ENCODE measurements at regions of chr7 and their contacts with region 1.

Region 1: DNA sequence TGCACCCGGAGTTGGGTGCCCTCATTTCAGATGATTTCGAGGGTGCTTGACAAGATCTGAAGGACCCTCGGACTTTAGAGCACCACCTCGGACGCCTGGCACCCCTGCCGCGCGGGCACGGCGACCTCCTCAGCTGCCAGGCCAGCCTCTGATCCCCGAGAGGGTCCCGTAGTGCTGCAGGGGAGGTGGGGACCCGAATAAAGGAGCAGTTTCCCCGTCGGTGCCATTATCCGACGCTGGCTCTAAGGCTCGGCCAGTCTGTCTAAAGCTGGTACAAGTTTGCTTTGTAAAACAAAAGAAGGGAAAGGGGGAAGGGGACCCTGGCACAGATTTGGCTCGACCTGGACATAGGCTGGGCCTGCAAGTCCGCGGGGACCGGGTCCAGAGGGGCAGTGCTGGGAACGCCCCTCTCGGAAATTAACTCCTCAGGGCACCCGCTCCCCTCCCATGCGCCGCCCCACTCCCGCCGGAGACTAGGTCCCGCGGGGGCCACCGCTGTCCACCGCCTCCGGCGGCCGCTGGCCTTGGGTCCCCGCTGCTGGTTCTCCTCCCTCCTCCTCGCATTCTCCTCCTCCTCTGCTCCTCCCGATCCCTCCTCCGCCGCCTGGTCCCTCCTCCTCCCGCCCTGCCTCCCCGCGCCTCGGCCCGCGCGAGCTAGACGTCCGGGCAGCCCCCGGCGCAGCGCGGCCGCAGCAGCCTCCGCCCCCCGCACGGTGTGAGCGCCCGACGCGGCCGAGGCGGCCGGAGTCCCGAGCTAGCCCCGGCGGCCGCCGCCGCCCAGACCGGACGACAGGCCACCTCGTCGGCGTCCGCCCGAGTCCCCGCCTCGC is at the start of gene EGFR:
- DNase-seq: peak; percentile 83 to 89 (median 85)
- ATAC-seq: peak; percentile 65 to 89 (median 84)
- H3K4me3 ChIP-seq: peak within 1 kb of the TSS; percentile 62 to 95 (median 84)
- H3K27ac ChIP-seq: peak within 1 kb of the TSS; percentile 61 to 97 (median 94)
- H3K4me1 ChIP-seq: peaks cover 0 to 22% (median 9%) of the 10 kb centered on the region in 12 donors
- H3K27me3 ChIP-seq: peaks cover 0 to 32% (median 14%) of the 10 kb centered on the region in 9 donors
- CTCF ChIP-seq: no peak
- POLR2A ChIP-seq: peak in 1 of 2 donors; percentile 79
- total RNA-seq, gene EGFR: 4.6 to 29.6 (median 8.7) TPM

Region 2: GRCh38 chr7:54796150-54796549 is 222.4 kb before region 1 on chr7:
- intact Hi-C with region 1: loop called in 1 of 10 experiments (anchors 10 kb)
- DNase-seq: no peak
- ATAC-seq: no peak
- H3K4me3 ChIP-seq: no peak overlapping the region
- H3K27ac ChIP-seq: no peak overlapping the region
- H3K4me1 ChIP-seq: peaks cover 0 to 6% (median 0%) of the 10 kb centered on the region in 12 donors
- H3K27me3 ChIP-seq: no peaks in the 10 kb centered on the region
- CTCF ChIP-seq: no peak
- POLR2A ChIP-seq: no peak

Region 3: DNA sequence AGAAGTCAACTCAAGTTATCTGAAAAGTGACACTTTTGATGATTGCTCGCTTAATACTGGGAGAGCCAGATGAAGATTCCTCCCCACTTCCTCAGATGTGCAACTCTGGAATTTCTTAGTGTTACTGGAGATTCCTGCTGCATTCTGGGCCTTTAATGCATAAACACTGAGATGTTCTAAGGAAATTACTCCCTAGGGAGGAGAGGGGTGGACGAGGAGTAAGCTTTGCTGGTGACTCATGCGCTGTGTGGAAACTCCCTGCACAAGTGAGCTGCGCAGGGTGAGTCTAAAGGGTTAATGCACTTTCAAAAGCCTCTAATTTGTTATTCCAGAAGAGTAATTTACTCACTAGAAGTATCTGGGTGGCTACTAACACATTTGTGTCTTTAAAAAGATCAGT is 46.5 kb after region 1 on chr7:
- intact Hi-C with region 1: loop called in 2 of 10 experiments (anchors 5 kb)
- DNase-seq: peak in 2 of 5 donors; percentile 49 to 65
- ATAC-seq: peak in 3 of 4 donors; percentile 71 to 84 (median 74)
- H3K4me3 ChIP-seq: no peak overlapping the region
- H3K27ac ChIP-seq: peak overlapping the region in 11 of 12 donors; percentile 8 to 76 (median 63)
- H3K4me1 ChIP-seq: peaks cover 0 to 43% (median 18%) of the 10 kb centered on the region in 12 donors
- H3K27me3 ChIP-seq: no peaks in the 10 kb centered on the region
- CTCF ChIP-seq: no peak
- POLR2A ChIP-seq: no peak

Region 4: GRCh38 chr7:55092186-55092974 is 73.8 kb after region 1 on chr7:
- intact Hi-C with region 1: loop called in 1 of 10 experiments (anchors 5 kb)
- DNase-seq: no peak
- ATAC-seq: peak in 2 of 4 donors; percentile 16 to 41
- H3K4me3 ChIP-seq: no peak overlapping the region
- H3K27ac ChIP-seq: peak overlapping the region in 9 of 12 donors; percentile 3 to 46 (median 20)
- H3K4me1 ChIP-seq: peaks cover 0 to 52% (median 26%) of the 10 kb centered on the region in 12 donors
- H3K27me3 ChIP-seq: no peaks in the 10 kb centered on the region
- CTCF ChIP-seq: no peak
- POLR2A ChIP-seq: no peak

Region 5: GRCh38 chr7:55132890-55133551 is 114.4 kb after region 1 on chr7:
- intact Hi-C with region 1: loop called in 4 of 10 experiments (anchors 2 to 5 kb)
- DNase-seq: peak in 2 of 5 donors; percentile 33 to 50
- ATAC-seq: peak in 2 of 4 donors; percentile 3 to 35
- H3K4me3 ChIP-seq: no peak overlapping the region
- H3K27ac ChIP-seq: peak overlapping the region in 11 of 12 donors; percentile 58 to 89 (median 77)
- H3K4me1 ChIP-seq: peaks cover 15 to 61% (median 51%) of the 10 kb centered on the region in 12 donors
- H3K27me3 ChIP-seq: no peaks in the 10 kb centered on the region
- CTCF ChIP-seq: no peak
- POLR2A ChIP-seq: no peak

Region 6: GRCh38 chr7:55192718-55193117 is 174.1 kb after region 1 on chr7:
- intact Hi-C with region 1: loop called in 1 of 10 experiments (anchors 1 kb)
- DNase-seq: no peak
- ATAC-seq: peak in 2 of 4 donors; percentile 20 to 23
- H3K4me3 ChIP-seq: no peak overlapping the region
- H3K27ac ChIP-seq: peak overlapping the region in 9 of 12 donors; percentile 0 to 50 (median 29)
- H3K4me1 ChIP-seq: peaks cover 0 to 49% (median 19%) of the 10 kb centered on the region in 12 donors
- H3K27me3 ChIP-seq: no peaks in the 10 kb centered on the region
- CTCF ChIP-seq: no peak
- POLR2A ChIP-seq: no peak

Region 7: GRCh38 chr7:55233001-55233400 is 214.4 kb after region 1 on chr7:
- intact Hi-C with region 1: no loop called
- DNase-seq: no peak
- ATAC-seq: no peak
- H3K4me3 ChIP-seq: no peak overlapping the region
- H3K27ac ChIP-seq: no peak overlapping the region
- H3K4me1 ChIP-seq: no peaks in the 10 kb centered on the region
- H3K27me3 ChIP-seq: peaks cover 0 to 2% (median 0%) of the 10 kb centered on the region in 9 donors
- CTCF ChIP-seq: no peak
- POLR2A ChIP-seq: no peak

Region 8: DNA sequence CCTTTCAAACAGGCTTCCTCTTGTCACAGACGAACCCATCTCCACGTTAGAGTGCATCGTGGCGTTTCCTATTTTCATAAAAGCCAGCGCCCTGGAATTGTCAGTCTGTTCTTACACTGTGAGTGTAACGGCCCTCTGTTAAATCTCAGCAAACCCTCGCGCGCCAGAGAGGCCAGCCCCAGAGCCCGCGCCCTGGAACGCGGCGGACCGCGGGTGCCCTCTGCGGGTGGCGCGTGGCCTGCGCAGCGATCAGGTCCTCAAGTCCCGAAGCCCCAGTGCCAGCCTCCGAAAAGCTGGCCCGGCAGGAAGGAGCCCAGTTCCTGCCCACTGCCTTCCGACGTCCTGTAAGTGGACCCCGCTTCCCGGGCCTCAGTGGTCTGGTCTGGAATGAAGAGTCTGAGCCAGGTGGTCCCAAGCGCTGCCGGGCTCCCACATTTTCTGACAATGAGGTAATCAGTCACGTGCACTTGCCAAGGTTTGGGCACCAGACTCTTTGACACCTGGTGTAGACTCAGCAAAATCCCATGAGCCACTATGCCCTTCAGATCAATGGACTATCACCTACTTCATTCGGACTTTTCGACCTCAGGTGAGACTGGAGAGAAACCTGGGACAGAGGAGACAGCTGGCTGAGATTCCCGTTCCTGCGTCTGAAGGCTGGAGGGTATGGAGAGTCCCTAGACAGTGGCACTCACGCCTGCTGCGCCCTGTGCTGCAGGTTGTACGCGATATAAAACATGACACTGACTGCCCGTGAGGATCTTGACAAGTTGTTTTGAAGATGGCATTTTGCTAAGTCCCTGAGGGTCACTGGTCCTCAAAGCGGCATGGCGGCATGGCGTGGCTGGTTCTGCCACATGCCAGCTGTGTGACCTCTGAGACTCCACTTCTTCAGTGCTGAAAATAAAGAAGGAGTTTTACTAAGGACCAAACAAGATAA is 237.2 kb after region 1 on chr7:
- intact Hi-C with region 1: loop called in 4 of 10 experiments (anchors 2 to 10 kb)
- DNase-seq: peak; percentile 76 to 88 (median 79)
- ATAC-seq: peak; percentile 87 to 97 (median 94)
- H3K4me3 ChIP-seq: peak overlapping the region; percentile 38 to 72 (median 60)
- H3K27ac ChIP-seq: peak overlapping the region in 5 of 12 donors; percentile 3 to 58 (median 45)
- H3K4me1 ChIP-seq: peaks cover 0 to 19% (median 10%) of the 10 kb centered on the region in 12 donors
- H3K27me3 ChIP-seq: peaks cover 0 to 41% (median 14%) of the 10 kb centered on the region in 9 donors
- CTCF ChIP-seq: peak; percentile 71 to 94 (median 88)
- POLR2A ChIP-seq: no peak